HepG2 (cell line): ENCODE measurements at regions of chr5 and their contacts with region 1.

Region 1: GRCh38 chr5:90529194-90529938 is at the start of gene LYSMD3:
- DNase-seq: peak; percentile 92
- ATAC-seq: peak; percentile 96
- H3K4me3 ChIP-seq: peak within 1 kb of the TSS; percentile 87 to 99 (median 97)
- H3K27ac ChIP-seq: peak within 1 kb of the TSS; percentile 82
- H3K4me1 ChIP-seq: peaks cover 30% of the 10 kb centered on the region
- H3K27me3 ChIP-seq: peaks cover 0 to 4% of the 10 kb centered on the region in 2 experiments; a peak in 1 of 5 replicates
- CTCF ChIP-seq: no peak
- EP300 ChIP-seq: no peak; a peak in 1 of 4 replicates
- POLR2A ChIP-seq: peak; percentile 72 to 92; a peak in 3 of 4 replicates
- RAD21 ChIP-seq: peak; percentile 40; the same call in 1 of the 2 replicates
- total RNA-seq, gene LYSMD3: 13.8 and 22.2 TPM in 2 replicates

Region 2: DNA sequence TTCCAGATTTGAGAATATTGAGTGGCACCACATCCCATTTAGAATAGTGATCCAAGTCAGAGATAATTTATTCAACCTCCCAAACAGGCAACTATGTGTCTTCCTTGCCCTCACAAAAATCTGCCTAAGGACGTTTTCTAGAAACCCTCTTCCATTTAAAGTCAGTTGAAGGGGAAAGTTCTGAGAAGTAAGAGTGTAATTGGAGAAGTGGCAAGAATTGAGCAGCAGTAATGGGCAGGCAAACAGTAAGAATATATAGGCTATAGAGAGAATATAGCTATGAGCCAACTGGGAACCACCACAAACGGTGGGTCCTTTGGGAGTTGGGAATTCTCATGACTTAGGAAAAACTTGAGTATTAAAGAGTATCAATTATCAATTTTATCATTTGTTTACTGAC is 88.7 kb before region 1 on chr5:
- CTCF ChIA-PET with region 1: interaction called, 35 read pairs
- POLR2A ChIA-PET with region 1: no interaction called
- in situ Hi-C with region 1: loop called (anchors 10 kb)
- intact Hi-C with region 1: loop called (anchors 1 kb)
- DNase-seq: no peak
- ATAC-seq: peak; percentile 33; the same call in 1 of the 3 replicates
- H3K4me3 ChIP-seq: no peak overlapping the region; a peak in 1 of 6 replicates
- H3K27ac ChIP-seq: no peak overlapping the region
- H3K4me1 ChIP-seq: peaks cover 7% of the 10 kb centered on the region
- H3K27me3 ChIP-seq: no peaks in the 10 kb centered on the region
- CTCF ChIP-seq: no peak
- EP300 ChIP-seq: no peak
- POLR2A ChIP-seq: no peak
- RAD21 ChIP-seq: no peak

Region 3: GRCh38 chr5:90474235-90475109 is 54.9 kb before region 1 on chr5 and contains the starts of genes MBLAC2 and POLR3G:
- CTCF ChIA-PET with region 1: no interaction called
- POLR2A ChIA-PET with region 1: interaction called, 4 read pairs
- in situ Hi-C with region 1: no loop called
- intact Hi-C with region 1: loop called (anchors 1 kb)
- DNase-seq: peak; percentile 86
- ATAC-seq: peak; percentile 91
- H3K4me3 ChIP-seq: peak within 1 kb of the TSS; percentile 68 to 83 (median 81)
- H3K27ac ChIP-seq: peak within 1 kb of the TSS; percentile 94
- H3K4me1 ChIP-seq: peaks cover 43% of the 10 kb centered on the region
- H3K27me3 ChIP-seq: no peaks in the 10 kb centered on the region
- CTCF ChIP-seq: peak; percentile 63
- EP300 ChIP-seq: 0 out of 4 replicates have a peak, but pooled peaks of 1 of the 2 experiments have one; percentile 30
- POLR2A ChIP-seq: peak; percentile 88 to 89
- RAD21 ChIP-seq: peak; percentile 22; the same call in 1 of the 2 replicates
- total RNA-seq, gene MBLAC2: 4.1 and 5.7 TPM in 2 replicates
- total RNA-seq, gene POLR3G: 7.3 and 11.2 TPM in 2 replicates